ENCODE measurements at regions of chr1 and their contacts with region 1.

Region 1: GRCh38 chr1:152398812-152399698 is 15.0 kb downstream of the CRNN start:
- DNase-seq: peak in 4 of 5 donors; percentile 13 to 30 (median 16)
- H3K4me3 ChIP-seq: no peak overlapping the region
- H3K4me3 Mint-ChIP-seq: peak overlapping the region in 1 of 8 donors; percentile 43
- H3K27ac ChIP-seq: no peak overlapping the region
- H3K27ac Mint-ChIP-seq: peak overlapping the region in 3 of 7 donors; percentile 1 to 69 (median 5)
- H3K4me1 ChIP-seq: peaks cover 16% of the 10 kb centered on the region
- H3K4me1 Mint-ChIP-seq: peaks cover 14 to 24% (median 22%) of the 10 kb centered on the region in 4 donors
- H3K27me3 ChIP-seq: no peaks in the 10 kb centered on the region
- H3K27me3 Mint-ChIP-seq: peaks cover 3 to 6% of the 10 kb centered on the region in 2 donors

Region 2: GRCh38 chr1:152440635-152441471 is 41.8 kb after region 1 on chr1:
- CTCF ChIA-PET with region 1: interaction called, 91 read pairs
- POLR2A ChIA-PET with region 1: interaction called, 6 read pairs
- intact Hi-C with region 1: loop called (anchors 1 kb)
- DNase-seq: peak; percentile 74 to 77 (median 75)
- H3K4me3 ChIP-seq: no peak overlapping the region
- H3K4me3 Mint-ChIP-seq: peak overlapping the region in 1 of 8 donors; percentile 56
- H3K27ac ChIP-seq: no peak overlapping the region
- H3K27ac Mint-ChIP-seq: peak overlapping the region in 2 of 7 donors; percentile 44 to 68
- H3K4me1 ChIP-seq: no peaks in the 10 kb centered on the region
- H3K4me1 Mint-ChIP-seq: peaks cover 4 to 14% (median 8%) of the 10 kb centered on the region in 4 donors
- H3K27me3 ChIP-seq: no peaks in the 10 kb centered on the region
- H3K27me3 Mint-ChIP-seq: peaks cover 19 to 22% of the 10 kb centered on the region in 2 donors

Region 3: GRCh38 chr1:152725261-152725660 is 326.2 kb after region 1 on chr1:
- CTCF ChIA-PET with region 1: no interaction called
- POLR2A ChIA-PET with region 1: no interaction called
- intact Hi-C with region 1: no loop called
- DNase-seq: no peak
- H3K4me3 ChIP-seq: no peak overlapping the region
- H3K4me3 Mint-ChIP-seq: no peak overlapping the region
- H3K27ac ChIP-seq: no peak overlapping the region
- H3K27ac Mint-ChIP-seq: no peak overlapping the region
- H3K4me1 ChIP-seq: no peaks in the 10 kb centered on the region
- H3K4me1 Mint-ChIP-seq: no peaks in the 10 kb centered on the region
- H3K27me3 ChIP-seq: no peaks in the 10 kb centered on the region
- H3K27me3 Mint-ChIP-seq: peaks cover 3 to 6% of the 10 kb centered on the region in 2 donors

Region 4: DNA sequence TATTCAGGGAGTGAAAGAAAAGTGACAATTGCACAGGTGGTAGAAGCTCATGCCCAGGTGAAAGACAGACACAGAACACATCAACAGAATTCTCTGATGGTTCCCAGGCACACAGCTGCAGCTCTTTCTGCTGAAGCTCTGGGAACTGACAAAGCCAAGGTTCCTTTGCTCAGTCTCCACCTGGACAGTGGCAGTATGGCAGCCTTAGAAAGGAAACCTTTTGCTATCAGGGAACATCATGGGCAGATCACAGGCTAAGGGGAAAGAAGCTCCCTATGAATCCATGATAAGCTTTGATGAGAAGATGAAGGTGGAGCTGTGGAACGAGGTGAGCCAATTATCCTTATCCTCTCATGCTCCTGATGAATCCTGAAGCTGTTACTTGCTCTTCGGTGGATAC is 671.2 kb after region 1 on chr1:
- CTCF ChIA-PET with region 1: no interaction called
- POLR2A ChIA-PET with region 1: no interaction called
- intact Hi-C with region 1: no loop called
- DNase-seq: peak in 1 of 5 donors; percentile 25
- H3K4me3 ChIP-seq: no peak overlapping the region
- H3K4me3 Mint-ChIP-seq: no peak overlapping the region
- H3K27ac ChIP-seq: no peak overlapping the region
- H3K27ac Mint-ChIP-seq: no peak overlapping the region
- H3K4me1 ChIP-seq: no peaks in the 10 kb centered on the region
- H3K4me1 Mint-ChIP-seq: no peaks in the 10 kb centered on the region
- H3K27me3 ChIP-seq: no peaks in the 10 kb centered on the region
- H3K27me3 Mint-ChIP-seq: peaks cover 9 to 14% of the 10 kb centered on the region in 2 donors

Measured in CD4-positive, alpha-beta memory T cell (primary cell).